ENCODE measurements at regions of chr4 and their contacts with region 1.

Region 1: DNA sequence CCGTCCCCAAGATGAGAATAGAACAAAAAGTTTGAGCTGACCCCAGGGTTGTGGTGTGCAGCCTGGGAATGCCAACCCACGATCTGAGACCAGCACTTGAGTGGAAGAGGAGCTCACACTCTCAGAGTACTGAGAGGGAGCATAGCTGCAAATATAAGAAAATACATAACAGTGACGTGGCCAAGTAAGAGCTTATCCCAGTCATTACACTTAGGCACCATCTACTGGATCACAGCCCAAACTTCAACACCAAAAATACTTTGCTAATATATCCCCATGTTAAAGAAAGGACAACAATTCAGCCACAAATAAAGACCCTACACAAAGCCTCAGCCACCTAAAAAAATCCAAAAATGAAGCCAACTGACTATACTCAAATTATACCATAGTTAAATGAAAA is 33.3 kb upstream of the CXCL6 start:
- DNase-seq: no peak
- H3K4me3 ChIP-seq: no peak overlapping the region
- H3K27ac ChIP-seq: no peak overlapping the region
- H3K4me1 ChIP-seq: no peaks in the 10 kb centered on the region
- H3K27me3 ChIP-seq: no peaks in the 10 kb centered on the region
- CTCF ChIP-seq: no peak

Region 2: GRCh38 chr4:73780834-73781233 is 22.4 kb before region 1 on chr4:
- intact Hi-C with region 1: loop called (anchors 1 kb)
- DNase-seq: no peak
- H3K4me3 ChIP-seq: no peak overlapping the region
- H3K27ac ChIP-seq: no peak overlapping the region
- H3K4me1 ChIP-seq: peaks cover 0 to 8% of the 10 kb centered on the region in 2 donors
- H3K27me3 ChIP-seq: no peaks in the 10 kb centered on the region
- CTCF ChIP-seq: no peak

Measured in ascending aorta (tissue), 2 donors.